HEK293 (cell line): ENCODE measurements at regions of chr5 and their contacts with region 1.

Region 1: DNA sequence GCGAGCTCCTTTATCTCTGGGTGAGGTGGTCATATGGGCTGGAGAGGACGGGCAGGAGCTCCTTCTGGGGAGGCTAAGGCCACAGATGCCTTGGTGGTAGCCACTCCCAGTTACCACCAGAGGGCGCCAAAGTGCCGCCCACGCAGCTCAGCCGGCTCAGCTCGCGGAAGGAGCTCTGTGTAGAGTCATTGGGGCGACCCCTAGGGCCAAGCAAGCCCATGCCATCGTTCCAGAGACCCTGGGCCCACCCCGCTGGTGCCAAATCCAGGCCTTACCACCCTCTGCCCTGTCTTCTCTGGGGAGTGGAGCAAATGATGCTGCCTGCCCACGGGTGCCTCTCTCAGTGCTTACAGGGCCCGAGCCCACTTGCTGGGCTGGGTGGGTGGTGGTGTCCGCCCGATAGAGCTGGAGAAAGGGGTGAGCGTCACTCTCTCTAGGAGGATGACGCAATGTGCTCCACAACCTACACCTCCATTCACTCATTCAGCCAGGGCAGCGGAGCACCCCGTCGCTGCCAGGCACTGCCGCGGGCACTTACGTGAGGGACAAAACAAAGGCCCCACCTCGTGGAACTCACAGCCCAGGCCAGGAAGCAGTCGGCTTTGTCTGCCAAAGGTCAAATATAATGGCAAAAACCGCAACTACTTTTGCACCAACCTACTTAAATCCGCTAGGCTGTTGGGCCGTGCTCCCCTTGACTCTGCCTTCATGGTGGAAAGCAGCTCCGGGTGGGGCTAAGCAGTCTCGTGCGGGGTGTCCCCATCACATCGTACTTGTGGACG is 13.8 kb downstream of the TSPAN17 start:
- H3K4me3 ChIP-seq: no peak overlapping the region
- H3K27ac ChIP-seq: no peak overlapping the region
- H3K4me1 ChIP-seq: no peaks in the 10 kb centered on the region
- CTCF ChIP-seq: peak; percentile 97

Region 2: DNA sequence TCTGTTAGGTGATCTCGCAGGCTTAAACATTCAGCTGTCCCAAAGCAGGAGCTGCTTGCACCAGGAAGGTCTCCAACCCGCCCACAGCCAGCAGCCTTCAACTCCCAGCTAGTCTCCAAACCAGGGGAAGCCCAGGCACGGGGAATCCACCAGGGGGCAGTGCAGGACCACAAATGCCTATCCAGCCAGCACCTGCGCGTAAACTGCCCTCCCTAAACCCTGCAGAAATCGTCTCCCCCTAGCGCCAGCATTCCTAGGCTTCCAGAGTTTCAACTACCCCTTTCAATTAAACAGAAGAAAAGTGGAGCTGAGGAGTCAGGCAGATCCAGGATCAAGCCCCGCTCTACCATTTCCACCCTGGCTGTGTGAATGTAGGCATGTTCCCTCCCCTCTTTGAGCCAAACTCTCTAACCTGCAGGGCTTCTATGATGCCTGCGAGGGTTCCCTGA is 931.2 kb before region 1 on chr5:
- CTCF ChIA-PET with region 1: interaction called, 10 read pairs
- POLR2A ChIA-PET with region 1: no interaction called
- H3K4me3 ChIP-seq: no peak overlapping the region
- H3K27ac ChIP-seq: no peak overlapping the region
- H3K4me1 ChIP-seq: no peaks in the 10 kb centered on the region
- CTCF ChIP-seq: peak; percentile 98

Region 3: GRCh38 chr5:176677209-176678131 is 16.4 kb after region 1 on chr5:
- CTCF ChIA-PET with region 1: interaction called, 12 read pairs
- POLR2A ChIA-PET with region 1: no interaction called
- H3K4me3 ChIP-seq: no peak overlapping the region
- H3K27ac ChIP-seq: no peak overlapping the region
- H3K4me1 ChIP-seq: no peaks in the 10 kb centered on the region
- CTCF ChIP-seq: no peak

Region 4: GRCh38 chr5:176787676-176788075 is 126.6 kb after region 1 on chr5:
- CTCF ChIA-PET with region 1: interaction called, 10 read pairs
- POLR2A ChIA-PET with region 1: no interaction called
- H3K4me3 ChIP-seq: no peak overlapping the region
- H3K27ac ChIP-seq: no peak overlapping the region
- H3K4me1 ChIP-seq: peaks cover 7% of the 10 kb centered on the region
- CTCF ChIP-seq: no peak

Region 5: GRCh38 chr5:176844706-176845391 is 183.8 kb after region 1 on chr5:
- CTCF ChIA-PET with region 1: interaction called, 16 read pairs
- POLR2A ChIA-PET with region 1: no interaction called
- H3K4me3 ChIP-seq: peak overlapping the region; percentile 28
- H3K27ac ChIP-seq: no peak overlapping the region; the same call in 1 of the 2 replicates
- H3K4me1 ChIP-seq: peaks cover 7% of the 10 kb centered on the region
- CTCF ChIP-seq: no peak

Region 6: DNA sequence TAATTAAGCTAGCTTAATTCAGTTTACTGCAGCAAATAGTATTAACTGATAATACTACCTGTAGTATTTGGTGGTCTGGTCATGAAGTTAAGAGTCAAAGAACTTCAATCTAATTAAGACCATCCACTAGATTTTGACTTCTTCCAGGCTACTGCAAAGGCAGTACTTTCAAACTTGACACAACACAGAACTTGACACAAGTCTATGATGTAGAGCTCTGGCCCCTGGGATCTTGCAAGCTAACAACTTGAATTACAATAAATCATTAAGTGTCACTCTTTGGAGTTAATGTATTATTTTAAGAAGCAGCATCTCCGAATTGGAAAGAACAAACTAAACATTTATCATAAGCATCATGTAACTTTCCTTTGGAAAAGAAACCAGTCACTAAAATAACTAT is 304.6 kb after region 1 on chr5:
- CTCF ChIA-PET with region 1: interaction called, 39 read pairs
- POLR2A ChIA-PET with region 1: no interaction called
- H3K4me3 ChIP-seq: no peak overlapping the region
- H3K27ac ChIP-seq: no peak overlapping the region
- H3K4me1 ChIP-seq: no peaks in the 10 kb centered on the region
- CTCF ChIP-seq: no peak